ENCODE measurements at regions of chr15 and their contacts with region 1.

Region 1: DNA sequence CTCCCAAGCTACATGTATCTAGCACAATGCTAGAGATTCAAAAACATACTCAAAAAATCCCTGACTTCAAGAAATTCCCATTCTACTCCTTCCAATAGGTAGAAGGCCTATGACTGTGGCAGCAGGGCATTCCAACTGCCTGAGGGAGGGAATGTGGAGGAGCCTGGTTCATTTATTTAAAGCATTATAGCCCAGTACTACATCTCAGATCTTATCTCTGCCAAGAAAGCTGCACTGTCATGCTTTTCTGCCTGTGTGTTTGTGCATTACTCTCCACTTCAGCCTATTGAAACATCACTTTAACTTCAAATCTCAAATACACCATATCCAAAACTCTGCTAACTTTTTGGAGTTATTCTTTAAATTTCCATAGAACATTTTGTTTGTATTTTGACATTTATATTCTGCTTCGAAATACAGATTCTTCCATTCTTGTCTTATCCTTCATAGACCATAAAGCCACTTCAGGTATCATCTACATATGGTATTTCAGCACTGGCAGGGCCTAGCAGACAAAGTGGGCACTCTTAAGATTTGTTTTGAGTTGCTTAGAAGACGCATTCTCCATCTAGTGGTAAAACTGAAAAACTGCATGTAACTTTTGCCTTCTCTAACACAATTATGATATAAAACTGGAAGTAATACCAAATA is 59.1 kb upstream of the NEDD4 start:
- DNase-seq: peak; percentile 24
- ATAC-seq: peak; percentile 85
- H3K4me3 Mint-ChIP-seq: no peak overlapping the region
- H3K27ac Mint-ChIP-seq: no peak overlapping the region
- H3K4me1 Mint-ChIP-seq: peaks cover 3% of the 10 kb centered on the region
- H3K27me3 Mint-ChIP-seq: no peaks in the 10 kb centered on the region

Region 2: DNA sequence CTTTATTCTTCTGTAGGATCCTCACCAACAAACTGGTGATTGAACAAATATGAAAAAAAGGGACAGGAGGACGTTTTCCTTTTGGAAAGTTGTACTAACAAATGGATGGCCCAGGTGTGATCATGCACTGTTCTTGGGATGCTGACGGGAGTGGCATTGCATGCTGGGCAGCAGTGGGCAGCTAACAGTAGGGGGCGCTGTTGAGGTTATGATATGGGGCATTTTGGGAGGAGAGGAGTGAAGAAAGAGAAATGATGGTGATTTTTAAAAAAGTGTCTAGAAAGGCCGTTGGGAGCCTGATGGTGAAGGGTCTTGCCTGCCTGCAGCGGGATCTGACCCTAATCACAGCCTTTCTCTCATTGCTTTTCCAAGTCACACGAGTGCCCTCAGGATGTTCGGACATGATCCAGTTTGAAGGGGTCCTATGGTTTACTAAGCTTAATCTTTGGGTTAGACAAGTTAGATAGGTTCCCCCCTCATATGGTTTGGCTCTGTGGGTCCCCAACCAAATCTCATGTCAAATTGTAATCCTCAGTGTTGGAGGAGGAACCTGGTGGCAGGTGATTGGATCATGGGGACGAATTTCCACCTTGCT is 263.4 kb before region 1 on chr15:
- CTCF ChIA-PET with region 1: no interaction called
- POLR2A ChIA-PET with region 1: no interaction called
- intact Hi-C with region 1: loop called in 1 of 2 experiments (anchors 1 kb)
- DNase-seq: peak; percentile 83
- ATAC-seq: peak; percentile 57
- H3K4me3 Mint-ChIP-seq: no peak overlapping the region
- H3K27ac Mint-ChIP-seq: no peak overlapping the region
- H3K4me1 Mint-ChIP-seq: no peaks in the 10 kb centered on the region
- H3K27me3 Mint-ChIP-seq: no peaks in the 10 kb centered on the region

Region 3: GRCh38 chr15:55846116-55846707 is 206.3 kb before region 1 on chr15:
- CTCF ChIA-PET with region 1: interaction called, 3 read pairs
- POLR2A ChIA-PET with region 1: no interaction called
- intact Hi-C with region 1: loop called in 1 of 2 experiments (anchors 1 kb)
- DNase-seq: peak; percentile 52
- ATAC-seq: peak; percentile 66
- H3K4me3 Mint-ChIP-seq: no peak overlapping the region
- H3K27ac Mint-ChIP-seq: no peak overlapping the region
- H3K4me1 Mint-ChIP-seq: no peaks in the 10 kb centered on the region
- H3K27me3 Mint-ChIP-seq: no peaks in the 10 kb centered on the region

Region 4: DNA sequence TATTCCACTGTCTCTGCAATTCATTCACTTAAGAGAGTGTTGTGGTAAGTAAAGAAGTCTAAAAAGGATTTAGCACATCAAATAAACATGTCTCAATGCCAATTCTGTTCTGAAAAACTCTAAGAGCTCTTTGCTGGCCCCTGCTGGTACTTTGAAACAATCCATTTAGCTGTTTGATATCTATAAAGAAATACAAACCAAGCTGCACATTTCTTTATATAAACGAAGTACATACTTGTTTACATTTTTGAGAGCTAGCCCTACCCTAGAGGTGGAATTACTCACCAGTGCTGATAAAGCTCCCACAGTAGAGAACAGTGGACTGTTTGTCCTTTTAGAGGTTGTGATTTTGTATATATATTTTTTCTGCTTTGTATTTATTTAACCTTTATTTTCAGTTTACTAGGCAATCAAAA is 134.6 kb before region 1 on chr15:
- CTCF ChIA-PET with region 1: interaction called, 6 read pairs
- POLR2A ChIA-PET with region 1: no interaction called
- intact Hi-C with region 1: loop called in 1 of 2 experiments (anchors 10 kb)
- DNase-seq: peak; percentile 26
- ATAC-seq: no peak
- H3K4me3 Mint-ChIP-seq: no peak overlapping the region
- H3K27ac Mint-ChIP-seq: no peak overlapping the region
- H3K4me1 Mint-ChIP-seq: peaks cover 4% of the 10 kb centered on the region
- H3K27me3 Mint-ChIP-seq: no peaks in the 10 kb centered on the region

Region 5: DNA sequence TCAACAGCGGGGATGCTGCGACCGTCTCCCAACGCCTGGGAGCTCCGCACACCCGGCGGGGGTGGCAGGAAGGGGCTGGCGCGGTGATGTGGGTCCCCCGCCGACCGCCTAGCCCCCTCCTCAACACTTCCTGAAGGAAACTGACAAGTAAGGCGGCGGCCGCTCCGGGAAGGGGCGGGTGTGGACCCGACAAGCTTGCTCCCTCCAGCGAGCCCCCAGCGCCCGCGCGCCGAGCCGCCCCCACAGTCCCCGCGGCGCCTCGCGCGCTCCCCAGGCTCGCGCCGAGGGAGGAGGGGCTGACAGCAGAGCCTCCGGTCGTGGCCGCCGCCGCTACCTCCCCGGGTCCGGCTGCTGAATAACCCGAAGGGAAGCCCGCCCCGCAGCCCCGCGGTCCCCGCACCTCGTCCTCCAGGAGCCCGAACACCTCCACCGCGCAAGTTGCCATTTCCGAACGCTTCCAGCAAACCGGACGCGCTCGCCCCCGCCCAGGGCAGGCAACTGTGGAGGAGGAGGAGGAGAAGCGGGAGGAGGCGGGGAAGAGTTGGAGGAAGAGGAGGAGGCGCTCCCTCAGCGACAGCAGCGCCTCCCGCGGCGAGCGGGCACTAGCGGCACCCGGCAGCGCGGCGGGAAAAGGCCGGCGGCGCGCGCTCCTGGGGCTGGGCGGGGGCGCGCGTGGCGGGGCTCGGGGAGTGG is 59.3 kb before region 1 on chr15 and contains the start of gene NEDD4:
- CTCF ChIA-PET with region 1: interaction called, 6 read pairs
- POLR2A ChIA-PET with region 1: no interaction called
- intact Hi-C with region 1: loop called in 1 of 2 experiments (anchors 2 kb)
- DNase-seq: peak; percentile 86
- ATAC-seq: peak; percentile 91
- H3K4me3 Mint-ChIP-seq: peak within 1 kb of the TSS; percentile 84
- H3K27ac Mint-ChIP-seq: peak within 1 kb of the TSS; percentile 79
- H3K4me1 Mint-ChIP-seq: peaks cover 22% of the 10 kb centered on the region
- H3K27me3 Mint-ChIP-seq: no peaks in the 10 kb centered on the region
- total RNA-seq, gene NEDD4: 22.4 to 23.3 TPM

Region 6: DNA sequence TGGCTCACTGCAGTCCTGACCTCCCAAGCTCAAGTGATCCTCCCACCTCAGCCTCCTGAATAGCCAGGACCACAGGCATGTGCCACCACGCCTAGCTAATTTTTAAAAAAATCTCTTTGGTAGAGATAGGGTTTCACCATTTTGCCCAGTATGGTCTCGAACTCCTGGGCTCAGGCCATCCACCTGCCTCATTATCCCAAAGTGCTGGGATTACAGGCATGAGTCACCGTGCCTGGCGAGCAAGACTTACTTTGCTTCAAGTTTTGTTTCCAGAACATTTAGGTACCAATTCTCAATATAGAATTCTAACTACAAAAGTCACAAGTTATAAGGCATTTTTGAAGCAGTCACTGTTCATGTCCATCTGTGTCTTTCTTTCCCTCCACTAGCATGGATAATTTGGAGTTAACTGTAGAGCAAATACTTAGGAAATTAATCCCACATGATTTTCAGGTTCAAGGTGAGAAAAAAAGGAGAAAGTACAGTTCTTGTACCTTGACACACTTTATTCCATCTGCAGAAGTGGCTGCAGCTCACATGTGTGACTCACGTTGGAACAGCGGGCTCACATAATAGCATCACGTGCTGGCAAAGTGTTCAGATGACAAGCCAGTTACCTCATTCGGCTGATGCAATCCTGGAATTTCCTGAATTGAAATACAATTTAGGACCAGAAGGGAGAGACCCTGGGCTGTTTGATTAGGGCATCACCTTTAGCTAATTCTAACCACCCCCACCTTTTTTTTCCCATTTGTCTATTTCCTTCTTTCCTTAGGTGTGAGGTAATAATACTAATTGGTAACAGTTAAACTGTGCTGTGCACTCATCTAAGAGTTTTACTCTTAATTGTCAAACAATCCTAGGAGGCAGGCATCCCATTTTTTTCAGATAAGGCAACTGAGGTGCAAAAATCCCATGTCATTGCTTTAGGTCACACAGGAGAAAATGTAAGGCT is 12.2 kb before region 1 on chr15:
- CTCF ChIA-PET with region 1: interaction called, 15 read pairs
- POLR2A ChIA-PET with region 1: no interaction called
- intact Hi-C with region 1: no loop called
- DNase-seq: peak; percentile 63
- ATAC-seq: peak; percentile 31
- H3K4me3 Mint-ChIP-seq: no peak overlapping the region
- H3K27ac Mint-ChIP-seq: peak overlapping the region; percentile 87
- H3K4me1 Mint-ChIP-seq: peaks cover 61% of the 10 kb centered on the region
- H3K27me3 Mint-ChIP-seq: no peaks in the 10 kb centered on the region

Measured in activated CD4-positive, alpha-beta T cell treated with anti-CD3 and anti-CD28 coated beads for 36 hours (primary cell).